K562 (cell line): ENCODE measurements at regions of chr4 and their contacts with region 1.

Region 1: GRCh38 chr4:73901031-73901430 is 31.8 kb downstream of the CXCL1 start:
- DNase-seq: peak in 1 of 4 experiments; percentile 35
- ATAC-seq: no peak; the same call in 2 of the 3 replicates
- H3K4me3 ChIP-seq: no peak overlapping the region
- H3K27ac ChIP-seq: no peak overlapping the region
- H3K4me1 ChIP-seq: peaks cover 0 to 7% of the 10 kb centered on the region in 2 experiments
- H3K27me3 ChIP-seq: no peaks in the 10 kb centered on the region
- CTCF ChIP-seq: no peak
- EP300 ChIP-seq: peak; percentile 43; the same call in 1 of the 2 replicates
- POLR2A ChIP-seq: no peak
- RAD21 ChIP-seq: no peak

Region 2: GRCh38 chr4:73446336-73446938 is 454.6 kb before region 1 on chr4:
- CTCF ChIA-PET with region 1: no interaction called
- POLR2A ChIA-PET with region 1: no interaction called
- in situ Hi-C with region 1: no loop called
- intact Hi-C with region 1: no loop called
- DNase-seq: peak; percentile 41 to 67 (median 50)
- ATAC-seq: peak; percentile 90
- H3K4me3 ChIP-seq: no peak overlapping the region
- H3K27ac ChIP-seq: no peak overlapping the region
- H3K4me1 ChIP-seq: peaks cover 5 to 11% of the 10 kb centered on the region in 2 experiments; a peak in 3 of 5 replicates
- H3K27me3 ChIP-seq: no peaks in the 10 kb centered on the region
- CTCF ChIP-seq: peak; percentile 82 to 99 (median 98)
- EP300 ChIP-seq: no peak
- POLR2A ChIP-seq: no peak
- RAD21 ChIP-seq: peak; percentile 72 to 88

Region 3: DNA sequence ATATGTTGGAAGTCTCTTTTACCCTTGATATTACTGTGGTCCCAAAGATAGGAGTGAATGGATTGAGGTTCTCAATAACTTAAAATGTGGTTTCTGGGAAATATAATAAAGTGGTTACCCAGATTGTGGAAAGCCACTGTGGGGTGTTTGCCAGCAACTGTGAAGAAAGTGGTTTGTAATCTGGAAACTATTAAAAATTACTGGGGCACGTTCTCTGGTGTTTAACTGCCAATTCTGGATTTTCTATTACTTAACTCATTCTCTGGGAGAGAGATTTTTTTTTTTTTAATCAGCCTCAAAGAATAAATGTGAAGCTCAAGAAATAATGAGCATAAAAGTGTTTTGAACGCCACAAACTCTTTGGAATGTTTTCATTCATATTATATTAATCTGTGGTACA is 69.5 kb before region 1 on chr4:
- CTCF ChIA-PET with region 1: no interaction called
- POLR2A ChIA-PET with region 1: no interaction called
- in situ Hi-C with region 1: no loop called
- intact Hi-C with region 1: loop called (anchors 2 kb)
- DNase-seq: no peak
- ATAC-seq: no peak
- H3K4me3 ChIP-seq: no peak overlapping the region
- H3K27ac ChIP-seq: no peak overlapping the region
- H3K4me1 ChIP-seq: peaks cover 0 to 18% of the 10 kb centered on the region in 2 experiments; a peak in 2 of 5 replicates
- H3K27me3 ChIP-seq: no peaks in the 10 kb centered on the region
- CTCF ChIP-seq: no peak
- EP300 ChIP-seq: no peak
- POLR2A ChIP-seq: no peak
- RAD21 ChIP-seq: no peak